ENCODE measurements at regions of chr16 and their contacts with region 1.

Region 1: GRCh38 chr16:21599233-21600030 is at the start of gene METTL9:
- DNase-seq: peak; percentile 85 to 98 (median 96)

Region 2: DNA sequence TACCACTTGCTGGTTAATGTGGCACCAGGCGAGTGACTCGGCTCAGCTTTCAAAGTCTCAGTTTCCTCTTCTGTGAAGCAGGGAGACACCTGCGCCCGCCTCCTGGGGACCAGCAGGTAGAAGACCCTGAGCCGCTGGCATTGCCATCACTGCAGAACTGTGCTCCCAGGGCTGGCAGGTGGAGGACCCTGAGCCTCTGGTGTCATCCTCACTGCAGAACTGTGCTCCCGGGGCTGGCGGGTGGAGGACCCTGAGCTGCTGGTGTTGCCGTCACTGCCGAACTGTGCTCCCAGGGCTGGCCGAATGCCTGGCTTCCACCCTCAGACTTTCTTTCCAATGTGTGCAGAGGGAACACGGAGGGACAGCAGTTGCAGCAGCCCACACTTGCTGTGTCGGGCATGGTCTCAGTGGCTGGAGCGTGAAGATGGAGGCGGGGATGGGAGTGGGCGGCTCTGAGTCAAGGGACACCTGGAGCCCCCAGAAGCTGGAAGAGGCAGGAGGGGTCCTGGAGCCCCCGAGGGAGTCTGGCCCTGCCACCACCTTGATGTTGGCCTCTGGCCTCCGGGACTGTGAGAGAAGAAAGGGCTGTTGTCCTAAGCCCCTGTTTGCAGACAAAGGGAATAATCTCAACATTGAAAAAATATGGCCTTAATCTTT is 75.9 kb before region 1 on chr16:
- intact Hi-C with region 1: loop called (anchors 10 kb)
- DNase-seq: peak in 3 of 42 donors; percentile 37 to 45 (median 39)